ENCODE measurements at regions of chr2 and their contacts with region 1.

Region 1: DNA sequence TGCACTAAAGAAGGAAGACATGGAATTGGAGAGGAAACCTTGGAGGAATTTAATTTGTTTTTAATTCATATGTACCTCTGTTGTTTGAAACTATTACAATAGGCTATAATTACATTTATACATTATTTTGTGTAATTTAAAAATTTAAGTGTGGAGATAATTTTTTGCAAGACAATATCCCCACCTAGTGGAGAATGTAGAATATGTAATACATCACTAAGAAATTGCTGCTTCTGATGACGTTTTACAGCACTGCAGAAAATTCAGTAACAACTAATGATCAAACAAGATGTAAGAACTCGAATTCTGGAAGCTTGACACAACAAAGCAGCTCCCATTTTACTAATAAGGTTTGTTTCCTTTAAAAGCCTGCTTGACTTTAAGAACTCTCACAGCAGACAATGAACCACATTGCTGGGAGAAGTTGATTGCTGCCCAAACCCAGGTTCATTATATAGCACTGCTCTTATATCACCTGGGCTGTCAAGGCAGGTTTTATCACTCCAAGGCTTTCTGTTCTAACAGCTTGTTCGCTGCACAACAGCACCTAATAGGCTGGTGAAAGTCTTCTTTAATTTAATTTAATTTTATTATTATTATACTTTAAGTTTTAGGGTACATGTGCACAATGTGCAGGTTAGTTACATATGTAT is 53.4 kb downstream of the THADA start:
- DNase-seq: no peak
- ATAC-seq: peak; percentile 76
- H3K4me3 ChIP-seq: no peak overlapping the region
- H3K27ac ChIP-seq: no peak overlapping the region
- H3K4me1 ChIP-seq: no peaks in the 10 kb centered on the region
- H3K27me3 ChIP-seq: no peaks in the 10 kb centered on the region
- CTCF ChIP-seq: peak; percentile 36 to 58 (median 45); a peak in 3 of 6 replicates
- EP300 ChIP-seq: no peak
- POLR2A ChIP-seq: no peak
- RAD21 ChIP-seq: peak; percentile 61

Region 2: DNA sequence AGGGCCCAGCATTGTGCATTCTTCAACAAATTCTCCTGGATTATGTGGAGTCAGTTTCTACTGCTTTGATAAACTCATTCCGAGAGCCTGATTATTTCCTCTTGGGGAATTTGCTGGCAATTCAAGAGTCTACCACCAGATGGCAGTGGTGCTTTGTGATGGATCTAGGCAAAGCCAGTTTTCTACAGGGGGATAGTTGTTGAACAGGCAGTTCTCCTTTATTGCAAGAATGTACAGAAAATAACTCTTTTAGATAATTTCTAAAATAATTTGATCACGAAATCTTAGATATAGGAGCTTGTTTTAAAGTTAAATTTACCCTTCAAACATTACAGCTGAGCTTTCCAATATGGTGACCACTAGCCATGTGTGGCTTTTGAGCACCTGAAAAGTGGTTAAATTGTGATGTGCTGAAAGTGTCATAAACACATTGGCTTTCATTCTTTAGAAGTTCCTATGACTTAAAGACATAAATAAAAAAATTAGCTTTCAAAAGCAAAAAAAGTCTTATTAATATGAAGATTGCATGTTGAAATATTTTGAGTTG is 683.3 kb before region 1 on chr2:
- CTCF ChIA-PET with region 1: interaction called, 13 read pairs
- POLR2A ChIA-PET with region 1: no interaction called
- RAD21 ChIA-PET with region 1: interaction called, 6 read pairs
- SMC1A ChIA-PET with region 1: interaction called, 5 read pairs
- in situ Hi-C with region 1: no loop called
- intact Hi-C with region 1: no loop called
- DNase-seq: peak; percentile 52
- ATAC-seq: peak; percentile 70
- H3K4me3 ChIP-seq: no peak overlapping the region
- H3K27ac ChIP-seq: no peak overlapping the region
- H3K4me1 ChIP-seq: no peaks in the 10 kb centered on the region
- H3K27me3 ChIP-seq: peaks cover 0 to 2% of the 10 kb centered on the region in 2 experiments; a peak in 1 of 4 replicates
- CTCF ChIP-seq: peak; percentile 68 to 90 (median 86)
- EP300 ChIP-seq: no peak
- POLR2A ChIP-seq: no peak
- RAD21 ChIP-seq: peak; percentile 94

Region 3: DNA sequence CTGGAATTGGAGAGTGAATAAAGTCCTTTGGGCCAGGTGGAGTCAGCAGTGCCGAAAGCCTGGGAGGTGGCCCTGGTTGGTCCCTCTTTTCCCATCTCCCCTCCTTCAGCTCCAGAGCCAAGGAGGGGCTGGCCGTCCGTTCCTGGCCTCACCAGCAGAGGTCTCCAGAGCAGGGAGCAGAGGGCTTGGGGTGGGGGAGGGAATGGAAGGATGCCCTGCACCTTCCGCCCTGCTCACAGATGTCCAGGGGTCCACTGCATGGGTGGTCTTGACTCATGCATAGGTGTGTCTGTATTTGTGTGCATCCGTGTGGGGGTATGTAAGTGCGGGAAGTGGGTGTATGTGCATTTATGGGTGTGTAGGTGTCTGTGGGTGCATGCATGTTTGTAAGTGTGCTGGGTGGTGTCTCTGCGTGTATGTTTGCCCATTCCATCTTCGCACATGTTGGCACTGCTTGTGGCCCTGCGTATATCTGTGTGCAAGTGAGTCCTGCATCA is 517.8 kb before region 1 on chr2:
- CTCF ChIA-PET with region 1: interaction called, 11 read pairs
- POLR2A ChIA-PET with region 1: no interaction called
- RAD21 ChIA-PET with region 1: no interaction called
- SMC1A ChIA-PET with region 1: interaction called, 8 read pairs
- in situ Hi-C with region 1: no loop called
- intact Hi-C with region 1: no loop called
- DNase-seq: no peak
- ATAC-seq: peak; percentile 93
- H3K4me3 ChIP-seq: no peak overlapping the region
- H3K27ac ChIP-seq: no peak overlapping the region
- H3K4me1 ChIP-seq: no peaks in the 10 kb centered on the region
- H3K27me3 ChIP-seq: no peaks in the 10 kb centered on the region; a peak in 1 of 4 replicates
- CTCF ChIP-seq: peak; percentile 76 to 87 (median 81)
- EP300 ChIP-seq: no peak
- POLR2A ChIP-seq: no peak
- RAD21 ChIP-seq: peak; percentile 80

Region 4: DNA sequence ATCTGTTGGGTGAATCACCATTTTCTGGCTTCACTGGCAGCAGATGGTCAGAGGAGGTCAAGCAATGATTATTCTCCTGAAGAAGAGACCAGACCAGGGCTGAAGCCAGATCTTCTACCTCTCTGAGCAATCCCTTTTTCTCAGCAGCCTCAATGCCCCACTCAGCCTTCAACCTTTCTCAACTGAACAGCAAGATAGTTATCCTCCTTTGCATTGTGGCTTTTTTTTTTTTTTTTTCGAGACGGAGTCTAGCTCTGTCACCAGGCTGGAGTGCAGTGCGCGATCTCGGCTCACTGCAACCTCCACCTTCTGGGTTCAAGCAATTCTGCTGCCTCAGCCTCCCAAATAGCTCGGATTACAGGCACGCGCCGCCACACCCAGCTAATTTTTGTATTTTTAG is 366.5 kb before region 1 on chr2:
- CTCF ChIA-PET with region 1: no interaction called
- POLR2A ChIA-PET with region 1: no interaction called
- RAD21 ChIA-PET with region 1: no interaction called
- SMC1A ChIA-PET with region 1: no interaction called
- in situ Hi-C with region 1: no loop called
- intact Hi-C with region 1: no loop called
- DNase-seq: no peak
- ATAC-seq: no peak
- H3K4me3 ChIP-seq: no peak overlapping the region
- H3K27ac ChIP-seq: no peak overlapping the region
- H3K4me1 ChIP-seq: peaks cover 19% of the 10 kb centered on the region
- H3K27me3 ChIP-seq: no peaks in the 10 kb centered on the region; a peak in 1 of 4 replicates
- CTCF ChIP-seq: no peak
- EP300 ChIP-seq: no peak
- POLR2A ChIP-seq: no peak
- RAD21 ChIP-seq: no peak

Region 5: GRCh38 chr2:43312755-43313641 is 229.4 kb before region 1 on chr2:
- CTCF ChIA-PET with region 1: no interaction called
- POLR2A ChIA-PET with region 1: no interaction called
- RAD21 ChIA-PET with region 1: no interaction called
- SMC1A ChIA-PET with region 1: no interaction called
- in situ Hi-C with region 1: no loop called
- intact Hi-C with region 1: no loop called
- DNase-seq: no peak
- ATAC-seq: no peak
- H3K4me3 ChIP-seq: no peak overlapping the region
- H3K27ac ChIP-seq: no peak overlapping the region
- H3K4me1 ChIP-seq: peaks cover 9% of the 10 kb centered on the region; the same call in 1 of the 2 replicates
- H3K27me3 ChIP-seq: no peaks in the 10 kb centered on the region
- CTCF ChIP-seq: no peak
- EP300 ChIP-seq: no peak
- POLR2A ChIP-seq: no peak
- RAD21 ChIP-seq: no peak

Region 6: DNA sequence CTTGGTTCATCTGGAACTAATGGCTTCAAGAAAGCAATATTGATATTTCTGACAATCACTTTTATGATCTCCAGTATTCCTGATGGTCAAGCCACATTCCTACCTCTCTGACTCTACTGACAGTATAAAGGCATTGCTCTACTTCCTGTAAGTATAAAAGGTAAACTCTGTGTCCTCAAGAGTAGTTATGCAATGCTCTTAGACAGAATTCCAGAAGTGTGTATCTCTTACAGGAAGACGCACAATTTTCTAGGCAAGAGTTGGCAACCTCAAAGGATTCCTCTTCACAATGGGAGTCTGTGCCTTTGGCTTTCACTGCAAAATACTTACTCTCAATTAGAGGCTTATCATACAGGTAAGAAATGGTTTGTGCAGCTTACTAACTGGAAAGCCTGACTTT is 46.7 kb before region 1 on chr2:
- CTCF ChIA-PET with region 1: interaction called, 11 read pairs
- POLR2A ChIA-PET with region 1: no interaction called
- RAD21 ChIA-PET with region 1: interaction called, 4 read pairs
- SMC1A ChIA-PET with region 1: interaction called, 47 read pairs
- in situ Hi-C with region 1: no loop called
- intact Hi-C with region 1: loop called (anchors 2 kb)
- DNase-seq: no peak
- ATAC-seq: no peak
- H3K4me3 ChIP-seq: no peak overlapping the region
- H3K27ac ChIP-seq: no peak overlapping the region
- H3K4me1 ChIP-seq: no peaks in the 10 kb centered on the region
- H3K27me3 ChIP-seq: no peaks in the 10 kb centered on the region
- CTCF ChIP-seq: no peak
- EP300 ChIP-seq: no peak
- POLR2A ChIP-seq: no peak
- RAD21 ChIP-seq: no peak

Region 7: DNA sequence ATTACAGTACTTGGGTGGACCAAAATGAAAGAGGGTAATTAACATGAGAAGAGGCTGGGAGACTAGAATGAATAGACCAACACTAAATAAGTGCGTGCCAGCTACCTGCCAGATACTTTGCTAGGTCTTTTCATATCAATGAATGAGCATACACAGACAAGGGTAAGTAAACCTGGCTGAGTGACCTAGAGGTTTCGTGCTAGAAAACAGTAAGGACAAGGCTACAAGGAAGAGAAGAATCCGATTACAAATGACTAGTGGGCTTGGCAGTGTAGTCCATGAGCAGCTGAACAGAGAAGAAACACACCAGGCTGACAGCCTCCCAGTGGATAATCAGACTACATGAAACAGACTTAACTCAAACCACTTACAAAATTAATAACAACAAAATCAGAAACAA is 11.2 kb before region 1 on chr2:
- CTCF ChIA-PET with region 1: interaction called, 8 read pairs
- POLR2A ChIA-PET with region 1: no interaction called
- RAD21 ChIA-PET with region 1: interaction called, 3 read pairs
- SMC1A ChIA-PET with region 1: interaction called, 28 read pairs
- in situ Hi-C with region 1: no loop called
- intact Hi-C with region 1: no loop called
- DNase-seq: no peak
- ATAC-seq: no peak
- H3K4me3 ChIP-seq: no peak overlapping the region
- H3K27ac ChIP-seq: no peak overlapping the region
- H3K4me1 ChIP-seq: no peaks in the 10 kb centered on the region
- H3K27me3 ChIP-seq: no peaks in the 10 kb centered on the region
- CTCF ChIP-seq: no peak
- EP300 ChIP-seq: no peak
- POLR2A ChIP-seq: no peak
- RAD21 ChIP-seq: no peak

Region 8: DNA sequence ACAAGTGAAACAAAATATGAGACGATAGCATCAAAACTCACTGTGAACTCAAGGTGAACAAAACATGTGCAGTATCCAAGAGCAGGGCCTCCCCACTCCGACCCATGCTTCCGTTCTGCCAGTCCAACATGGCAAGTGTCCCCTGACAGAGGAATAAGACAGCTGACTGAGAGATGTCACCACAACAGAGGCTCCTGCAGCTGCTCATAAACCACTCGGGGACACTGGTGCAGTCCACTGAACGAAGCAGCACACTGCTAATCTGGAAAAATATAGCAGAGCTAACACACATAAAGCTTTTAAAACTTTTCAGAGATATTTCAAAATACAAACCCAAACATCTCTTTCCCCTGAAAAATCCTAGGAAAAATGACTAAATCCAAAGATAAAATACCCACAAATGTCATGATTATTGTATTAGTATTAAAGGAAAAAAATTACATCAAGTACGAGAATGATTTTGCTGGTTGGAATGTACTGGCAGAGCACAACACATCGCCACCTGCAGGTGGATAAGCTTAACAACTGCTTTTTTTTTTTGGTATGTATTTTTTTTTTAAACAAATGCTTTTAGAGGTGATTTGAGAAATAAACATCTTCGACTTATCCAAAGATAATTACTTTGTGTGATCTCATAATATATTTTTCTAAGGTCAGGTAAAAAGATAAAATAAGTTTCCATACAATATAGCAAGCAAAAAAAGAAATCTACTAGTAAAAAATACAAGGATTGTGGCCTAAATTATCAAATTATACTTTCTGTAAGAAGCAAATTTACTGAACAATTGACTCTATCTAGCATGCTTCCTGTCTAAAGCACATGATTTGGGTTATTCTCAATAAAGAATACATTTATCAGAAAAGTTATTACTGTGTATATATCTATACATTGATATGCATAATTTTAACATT is 34.8 kb after region 1 on chr2:
- CTCF ChIA-PET with region 1: interaction called, 22 read pairs
- POLR2A ChIA-PET with region 1: no interaction called
- RAD21 ChIA-PET with region 1: interaction called, 4 read pairs
- SMC1A ChIA-PET with region 1: interaction called, 5 read pairs
- in situ Hi-C with region 1: no loop called
- intact Hi-C with region 1: no loop called
- DNase-seq: no peak
- ATAC-seq: peak; percentile 45; the same call in 1 of the 3 replicates
- H3K4me3 ChIP-seq: no peak overlapping the region
- H3K27ac ChIP-seq: no peak overlapping the region
- H3K4me1 ChIP-seq: no peaks in the 10 kb centered on the region
- H3K27me3 ChIP-seq: no peaks in the 10 kb centered on the region
- CTCF ChIP-seq: peak; percentile 64 to 73 (median 70); a peak in 5 of 6 replicates
- EP300 ChIP-seq: no peak
- POLR2A ChIP-seq: no peak
- RAD21 ChIP-seq: peak; percentile 61

Region 9: DNA sequence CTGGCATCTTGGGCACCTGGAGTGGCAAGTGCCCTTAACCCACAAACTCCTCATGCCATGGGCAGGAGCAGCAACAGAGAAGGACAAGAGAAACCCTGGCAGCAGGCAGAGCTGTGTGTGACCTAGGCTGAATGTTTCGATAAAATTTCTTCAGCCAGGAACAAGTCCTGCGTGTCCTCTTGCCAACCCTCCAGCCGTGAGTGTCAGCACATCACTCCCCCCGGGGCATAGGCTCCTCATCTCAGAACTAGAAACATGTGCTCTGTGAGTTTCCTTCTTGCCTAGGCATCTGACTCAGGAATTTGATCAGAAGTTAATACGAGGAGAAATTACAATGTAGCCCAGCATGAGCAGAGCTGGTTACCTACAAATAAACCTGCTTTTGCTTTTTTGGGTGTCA is 298.6 kb after region 1 on chr2:
- CTCF ChIA-PET with region 1: no interaction called
- POLR2A ChIA-PET with region 1: no interaction called
- RAD21 ChIA-PET with region 1: no interaction called
- SMC1A ChIA-PET with region 1: no interaction called
- in situ Hi-C with region 1: no loop called
- intact Hi-C with region 1: no loop called
- DNase-seq: no peak
- ATAC-seq: no peak
- H3K4me3 ChIP-seq: no peak overlapping the region
- H3K27ac ChIP-seq: no peak overlapping the region
- H3K4me1 ChIP-seq: no peaks in the 10 kb centered on the region
- H3K27me3 ChIP-seq: peaks cover 4 to 6% of the 10 kb centered on the region in 2 experiments; a peak in 3 of 4 replicates
- CTCF ChIP-seq: no peak
- EP300 ChIP-seq: no peak
- POLR2A ChIP-seq: no peak
- RAD21 ChIP-seq: no peak

Measured in GM12878 (cell line).